Activated CD4-positive, alpha-beta T cell treated with anti-CD3 and anti-CD28 coated beads for 36 hours (primary cell): ENCODE measurements at regions of chr19 and their contacts with region 1.

Region 1: DNA sequence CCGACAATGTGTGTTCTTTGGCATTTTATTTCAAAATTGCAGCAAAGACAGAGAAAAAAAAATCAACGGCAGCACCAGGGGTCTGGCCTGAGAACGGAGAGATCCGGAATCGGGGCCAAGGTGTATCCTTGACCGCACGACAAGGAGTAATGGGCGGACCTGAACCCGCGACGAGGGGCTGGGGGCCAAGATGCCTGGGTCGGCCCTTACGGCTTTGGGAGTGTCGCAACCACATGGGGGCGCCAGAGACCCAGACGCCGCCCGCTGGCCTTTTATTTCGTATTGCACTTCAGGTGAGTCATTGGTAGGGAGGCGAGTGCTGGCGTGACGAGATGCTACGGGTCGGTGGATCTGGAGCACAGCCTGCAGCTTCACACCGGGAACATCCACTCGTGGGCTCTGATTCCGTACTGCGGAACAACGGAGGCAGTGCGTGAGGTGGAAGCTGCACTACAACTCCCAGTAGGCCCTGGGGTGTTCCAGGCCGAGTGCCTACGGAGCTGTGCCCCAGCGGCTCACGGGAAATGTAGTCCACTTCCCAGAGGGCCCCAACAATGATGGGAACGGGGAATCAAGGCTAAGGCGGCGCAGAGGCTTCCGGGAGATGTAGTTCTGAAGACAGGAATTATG is 15.7 kb downstream of the BCAT2 start:
- DNase-seq: peak; percentile 91
- ATAC-seq: peak; percentile 99
- H3K4me3 Mint-ChIP-seq: peak overlapping the region; percentile 70
- H3K27ac Mint-ChIP-seq: peak overlapping the region; percentile 82
- H3K4me1 Mint-ChIP-seq: peaks cover 7% of the 10 kb centered on the region
- H3K27me3 Mint-ChIP-seq: no peaks in the 10 kb centered on the region

Region 2: GRCh38 chr19:48646001-48646721 is 149.0 kb before region 1 on chr19 and contains the start of gene CA11:
- CTCF ChIA-PET with region 1: interaction called, 4 read pairs
- POLR2A ChIA-PET with region 1: no interaction called
- intact Hi-C with region 1: loop called in 1 of 2 experiments (anchors 1 kb)
- DNase-seq: peak; percentile 96
- ATAC-seq: peak; percentile 85
- H3K4me3 Mint-ChIP-seq: peak within 1 kb of the TSS; percentile 79
- H3K27ac Mint-ChIP-seq: peak within 1 kb of the TSS; percentile 88
- H3K4me1 Mint-ChIP-seq: peaks cover 44% of the 10 kb centered on the region
- H3K27me3 Mint-ChIP-seq: no peaks in the 10 kb centered on the region
- total RNA-seq, gene CA11: 11.5 to 18.0 TPM

Region 3: DNA sequence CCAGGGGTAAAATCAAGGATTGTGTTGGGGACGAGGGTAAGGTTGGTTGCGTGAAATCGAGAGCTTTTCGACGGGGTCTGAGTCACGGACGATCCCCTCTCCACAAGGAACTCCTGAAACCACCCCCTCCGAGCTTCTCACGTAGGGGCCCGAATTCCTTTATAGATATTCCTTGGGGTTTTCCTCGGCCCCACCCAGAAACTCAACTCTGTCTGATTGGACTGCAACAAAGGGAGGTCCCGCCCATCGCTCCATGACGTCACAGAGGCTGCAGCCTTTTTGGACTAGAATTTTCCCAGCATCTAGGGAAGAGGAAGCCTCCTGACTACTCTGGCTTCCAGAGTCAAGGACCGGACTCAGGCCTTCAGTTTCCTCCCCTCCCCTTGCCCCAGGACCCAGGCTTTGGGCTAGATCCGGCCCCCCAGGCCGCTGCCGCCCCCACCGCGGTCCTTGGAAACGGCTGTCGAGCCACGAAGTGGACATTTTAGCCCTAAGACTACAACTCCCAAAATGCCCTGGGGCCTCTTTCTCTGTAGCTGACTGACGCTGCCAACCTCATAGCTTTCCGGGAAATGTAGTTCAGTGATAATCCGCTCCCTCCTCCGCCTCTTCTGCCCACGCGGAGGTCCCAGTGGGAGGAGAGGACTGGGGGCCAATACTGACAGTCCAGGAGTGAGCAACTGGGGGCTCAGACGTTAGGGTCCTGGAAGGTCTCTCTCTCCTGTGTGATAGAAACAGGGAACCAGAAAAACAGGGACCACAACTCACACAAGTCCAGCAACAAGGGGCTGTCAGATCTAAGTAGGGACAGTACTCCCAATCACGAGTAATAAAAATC is 48.2 kb before region 1 on chr19 and contains the start of gene IZUMO1:
- CTCF ChIA-PET with region 1: no interaction called
- POLR2A ChIA-PET with region 1: no interaction called
- intact Hi-C with region 1: loop called in 1 of 2 experiments (anchors 1 kb)
- DNase-seq: peak; percentile 77
- ATAC-seq: peak; percentile 86
- H3K4me3 Mint-ChIP-seq: peak within 1 kb of the TSS; percentile 10
- H3K27ac Mint-ChIP-seq: no peak within 1 kb of the TSS
- H3K4me1 Mint-ChIP-seq: peaks cover 16% of the 10 kb centered on the region
- H3K27me3 Mint-ChIP-seq: peaks cover 14% of the 10 kb centered on the region
- total RNA-seq, gene IZUMO1: not detected

Region 4: DNA sequence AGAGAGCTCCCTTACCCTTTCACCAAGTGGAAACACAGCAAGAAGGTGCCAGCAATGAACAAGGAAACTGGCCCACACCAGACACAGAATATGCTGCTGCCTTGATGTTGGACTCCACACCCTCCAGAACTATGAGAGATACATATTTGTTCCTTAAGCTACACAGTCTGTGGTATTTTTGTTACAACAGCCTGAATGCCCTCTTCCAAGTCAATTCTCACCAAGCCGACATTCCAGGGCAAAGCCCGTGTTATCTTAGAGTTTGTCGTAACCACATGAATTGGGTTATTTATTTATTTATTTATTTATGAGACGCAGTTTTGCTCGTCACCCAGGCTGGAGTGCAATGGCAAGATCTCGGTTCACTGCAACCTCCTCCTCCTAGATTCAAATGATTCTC is 24.9 kb before region 1 on chr19:
- CTCF ChIA-PET with region 1: no interaction called
- POLR2A ChIA-PET with region 1: no interaction called
- intact Hi-C with region 1: no loop called
- DNase-seq: no peak
- ATAC-seq: no peak
- H3K4me3 Mint-ChIP-seq: no peak overlapping the region
- H3K27ac Mint-ChIP-seq: no peak overlapping the region
- H3K4me1 Mint-ChIP-seq: no peaks in the 10 kb centered on the region
- H3K27me3 Mint-ChIP-seq: peaks cover 9% of the 10 kb centered on the region

Region 5: DNA sequence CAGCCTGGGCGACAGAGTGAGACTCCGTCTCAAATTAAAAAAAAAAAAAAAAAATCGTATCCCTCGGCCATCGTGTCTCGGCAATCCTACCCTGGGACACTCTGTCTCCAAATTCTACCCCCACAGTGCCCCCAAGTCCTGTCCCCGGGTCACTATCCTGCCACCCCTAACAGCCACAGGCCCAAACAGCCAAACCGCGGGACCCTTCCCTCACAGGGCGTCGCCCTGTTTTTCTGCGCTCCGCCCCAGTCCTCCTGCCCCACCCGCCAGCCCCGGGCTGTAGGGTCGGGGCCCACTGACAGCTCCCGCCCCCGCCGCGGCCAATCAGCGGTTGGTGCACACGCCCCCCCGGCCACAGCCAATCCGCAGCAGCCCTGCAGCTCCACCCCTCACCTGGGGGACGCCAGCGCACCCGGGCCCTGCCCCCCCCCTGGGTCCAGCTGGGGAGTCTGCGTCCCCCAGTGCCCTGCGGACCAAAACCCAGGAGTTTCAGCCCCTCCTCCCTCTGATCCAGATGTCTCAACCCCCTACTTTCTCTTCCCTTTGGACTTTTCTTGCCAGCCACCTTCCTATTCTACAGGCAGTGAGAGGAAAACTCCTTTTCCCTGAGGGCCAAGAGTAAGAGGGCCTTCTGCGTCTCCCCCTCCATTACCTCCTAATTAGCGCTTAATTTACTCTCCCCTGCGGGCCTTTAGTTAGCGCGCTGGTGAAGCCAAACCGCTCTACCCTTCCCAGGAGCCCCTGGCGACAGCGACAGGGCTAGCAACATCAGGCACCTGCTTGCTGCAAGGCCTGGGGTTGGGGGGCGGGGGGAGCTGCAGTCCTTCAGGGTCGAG is 17.1 kb after region 1 on chr19:
- CTCF ChIA-PET with region 1: interaction called, 12 read pairs
- POLR2A ChIA-PET with region 1: interaction called, 4 read pairs
- intact Hi-C with region 1: loop called in 1 of 2 experiments (anchors 1 kb)
- DNase-seq: peak; percentile 78
- ATAC-seq: peak; percentile 40
- H3K4me3 Mint-ChIP-seq: peak overlapping the region; percentile 85
- H3K27ac Mint-ChIP-seq: peak overlapping the region; percentile 37
- H3K4me1 Mint-ChIP-seq: peaks cover 29% of the 10 kb centered on the region
- H3K27me3 Mint-ChIP-seq: no peaks in the 10 kb centered on the region

Region 6: DNA sequence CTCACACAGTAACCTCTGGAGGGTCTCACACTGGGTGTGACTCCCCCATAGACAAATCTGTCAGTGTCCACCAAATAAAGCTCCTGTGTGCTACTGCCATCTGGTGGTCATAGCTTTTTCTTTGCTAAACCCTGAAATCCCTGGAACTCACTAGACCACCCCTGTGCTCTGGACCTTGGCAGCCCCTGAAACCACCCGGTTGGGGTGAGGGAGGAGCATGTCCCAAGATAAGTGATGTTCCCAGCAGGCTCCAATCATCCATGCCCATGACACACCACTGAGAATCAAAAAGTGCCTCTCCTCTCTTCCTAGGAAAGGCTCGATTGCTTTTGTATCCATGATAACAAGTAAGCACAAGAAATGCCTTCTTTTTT is 47.6 kb after region 1 on chr19:
- CTCF ChIA-PET with region 1: interaction called, 44 read pairs
- POLR2A ChIA-PET with region 1: no interaction called
- intact Hi-C with region 1: no loop called
- DNase-seq: peak; percentile 62
- ATAC-seq: peak; percentile 53
- H3K4me3 Mint-ChIP-seq: no peak overlapping the region
- H3K27ac Mint-ChIP-seq: no peak overlapping the region
- H3K4me1 Mint-ChIP-seq: no peaks in the 10 kb centered on the region
- H3K27me3 Mint-ChIP-seq: no peaks in the 10 kb centered on the region

Region 7: DNA sequence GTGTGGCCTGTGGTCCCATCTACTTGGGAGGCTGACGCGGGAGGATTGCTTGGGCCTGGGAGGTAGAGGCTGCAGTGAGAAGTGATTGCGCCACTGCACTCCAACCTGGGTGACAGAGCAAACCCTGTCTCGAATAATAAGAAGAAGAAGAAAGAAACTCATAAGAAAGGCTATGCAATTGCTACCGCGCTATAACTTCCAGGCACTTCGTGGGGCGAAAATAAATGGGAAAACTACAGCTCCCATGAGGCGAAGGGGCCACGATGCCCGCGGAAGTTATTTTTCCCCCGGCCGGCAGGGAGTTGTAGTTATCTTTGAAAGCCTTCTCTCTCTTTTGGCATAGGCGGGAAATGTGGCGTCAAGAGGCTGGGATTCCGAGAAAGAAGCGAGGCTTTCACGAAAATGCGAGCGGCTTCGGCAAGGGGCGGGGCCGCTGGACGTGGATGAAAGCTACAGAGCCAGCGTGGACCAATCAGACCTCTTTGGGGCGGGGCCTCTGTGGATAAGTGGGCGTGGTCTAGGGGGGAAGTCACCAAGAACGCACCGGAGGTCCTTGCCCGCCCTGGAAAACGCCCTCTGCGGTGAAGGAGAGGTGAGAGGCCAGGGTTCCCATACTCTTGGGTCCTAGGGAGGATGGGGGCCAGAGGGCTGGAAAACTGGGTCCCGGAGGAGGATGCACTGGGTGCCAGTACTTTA is 104.8 kb after region 1 on chr19 and contains the start of gene NUCB1:
- CTCF ChIA-PET with region 1: interaction called, 5 read pairs
- POLR2A ChIA-PET with region 1: no interaction called
- intact Hi-C with region 1: loop called in 1 of 2 experiments (anchors 1 kb)
- DNase-seq: peak; percentile 100
- ATAC-seq: peak; percentile 95
- H3K4me3 Mint-ChIP-seq: peak within 1 kb of the TSS; percentile 99
- H3K27ac Mint-ChIP-seq: peak within 1 kb of the TSS; percentile 98
- H3K4me1 Mint-ChIP-seq: peaks cover 34% of the 10 kb centered on the region
- H3K27me3 Mint-ChIP-seq: peaks cover 5% of the 10 kb centered on the region
- total RNA-seq, gene NUCB1: 115 to 118 TPM

Region 8: DNA sequence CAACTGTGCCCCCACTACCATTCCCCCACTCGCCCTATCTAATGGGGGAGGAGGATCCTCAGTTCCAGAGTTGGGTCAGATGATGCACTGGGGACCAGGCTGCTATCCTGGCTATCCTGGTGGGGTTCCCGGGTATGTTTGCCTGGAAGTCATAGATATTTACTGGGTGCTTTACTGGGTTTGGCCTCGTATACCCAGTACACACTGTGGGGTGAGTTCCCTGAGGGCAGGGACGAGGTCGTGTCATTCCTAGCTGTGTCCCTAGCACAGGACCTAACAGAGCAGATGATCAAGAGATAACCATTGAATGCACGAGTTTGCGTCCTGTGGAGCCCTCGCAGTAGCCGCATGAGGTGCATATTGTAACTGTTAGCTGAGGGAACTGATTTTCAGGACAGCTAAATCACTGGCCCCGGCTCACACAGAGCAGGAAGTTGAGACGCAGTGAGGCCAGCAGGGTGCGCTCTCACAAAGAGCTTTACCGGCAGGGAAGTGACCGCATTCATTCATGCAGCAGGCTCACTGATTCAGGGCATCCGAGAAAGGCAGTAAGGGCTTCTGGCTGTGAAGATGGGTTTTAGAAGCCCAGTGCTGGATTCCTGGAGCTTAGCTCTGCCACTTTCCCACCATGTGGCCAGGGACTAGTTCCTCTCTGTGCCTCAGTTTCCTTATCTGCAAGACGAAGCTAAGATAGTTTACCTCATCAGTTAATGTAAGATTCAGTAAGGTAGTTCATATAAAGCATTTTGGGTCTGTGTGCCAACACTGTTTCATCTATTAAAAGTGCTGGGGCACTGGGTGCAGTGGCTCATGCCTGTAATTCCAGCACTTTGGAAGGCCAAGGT is 204.5 kb after region 1 on chr19:
- CTCF ChIA-PET with region 1: interaction called, 10 read pairs
- POLR2A ChIA-PET with region 1: no interaction called
- intact Hi-C with region 1: no loop called
- DNase-seq: peak; percentile 86
- ATAC-seq: peak; percentile 90
- H3K4me3 Mint-ChIP-seq: no peak overlapping the region
- H3K27ac Mint-ChIP-seq: no peak overlapping the region
- H3K4me1 Mint-ChIP-seq: peaks cover 18% of the 10 kb centered on the region
- H3K27me3 Mint-ChIP-seq: no peaks in the 10 kb centered on the region